Keratinocyte (primary cell): ENCODE measurements at regions of chr15 and their contacts with region 1.

Region 1: DNA sequence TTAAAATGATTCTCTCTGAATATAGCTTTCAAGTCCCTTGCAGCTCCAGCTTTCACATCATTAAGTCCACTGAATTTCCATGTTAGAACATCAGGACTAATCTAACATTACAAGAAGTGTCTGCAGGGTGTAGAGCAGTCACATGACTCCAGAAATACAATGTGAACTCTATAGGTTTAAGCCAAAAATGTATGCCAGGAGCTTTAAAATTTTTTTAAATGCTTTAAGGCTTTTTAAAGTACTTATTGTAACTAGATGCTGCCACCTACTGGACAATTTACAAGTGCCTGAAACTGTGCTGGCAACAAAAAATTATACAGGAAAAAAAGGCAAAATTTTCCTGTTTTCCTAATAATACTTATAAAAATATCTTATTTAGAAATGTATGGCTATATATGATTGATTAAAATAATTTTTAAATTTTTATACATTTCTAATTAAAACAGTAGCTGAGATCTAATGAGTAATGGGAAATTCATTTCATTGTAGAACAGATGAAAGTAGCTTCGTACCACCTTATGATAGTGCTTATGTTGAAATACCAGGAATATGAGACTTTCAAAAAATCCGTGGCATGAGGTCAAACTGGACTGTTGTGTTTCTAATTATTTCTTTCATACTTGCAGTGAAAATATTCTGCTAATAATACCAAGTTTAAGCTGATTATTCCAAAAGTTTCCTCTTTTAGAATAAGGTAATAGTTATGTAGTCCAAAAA is 25.7 kb downstream of the FSIP1 start:
- DNase-seq: peak; percentile 17
- H3K4me3 ChIP-seq: no peak overlapping the region
- H3K27ac ChIP-seq: no peak overlapping the region
- H3K4me1 ChIP-seq: no peaks in the 10 kb centered on the region
- H3K27me3 ChIP-seq: no peaks in the 10 kb centered on the region
- CTCF ChIP-seq: peak in 2 of 3 experiments; percentile 40 to 57

Region 2: DNA sequence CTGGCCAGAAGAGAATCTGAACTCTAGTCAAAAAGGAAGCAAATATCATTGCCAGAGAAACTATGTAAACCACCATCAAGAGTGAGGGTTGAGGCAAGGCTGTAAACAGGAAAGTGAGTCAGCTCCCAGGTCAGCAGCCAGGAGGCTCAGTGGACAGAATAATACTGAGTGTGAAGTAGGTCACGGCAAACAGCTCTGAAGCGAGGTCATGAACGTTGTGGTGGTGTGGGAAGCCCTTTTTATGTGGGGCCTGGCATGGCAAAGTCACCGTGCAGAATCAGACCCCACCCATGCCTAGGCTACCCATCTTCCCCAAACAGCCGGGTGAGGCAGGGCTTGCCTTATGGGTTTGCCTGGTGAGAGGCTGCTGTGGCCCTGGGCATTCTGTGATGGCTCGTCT is 132.2 kb before region 1 on chr15:
- dilution Hi-C with region 1: loop called (anchors 25 kb)
- DNase-seq: no peak
- H3K4me3 ChIP-seq: no peak overlapping the region
- H3K27ac ChIP-seq: peak overlapping the region; percentile 47
- H3K4me1 ChIP-seq: peaks cover 35% of the 10 kb centered on the region
- H3K27me3 ChIP-seq: no peaks in the 10 kb centered on the region
- CTCF ChIP-seq: no peak

Region 3: DNA sequence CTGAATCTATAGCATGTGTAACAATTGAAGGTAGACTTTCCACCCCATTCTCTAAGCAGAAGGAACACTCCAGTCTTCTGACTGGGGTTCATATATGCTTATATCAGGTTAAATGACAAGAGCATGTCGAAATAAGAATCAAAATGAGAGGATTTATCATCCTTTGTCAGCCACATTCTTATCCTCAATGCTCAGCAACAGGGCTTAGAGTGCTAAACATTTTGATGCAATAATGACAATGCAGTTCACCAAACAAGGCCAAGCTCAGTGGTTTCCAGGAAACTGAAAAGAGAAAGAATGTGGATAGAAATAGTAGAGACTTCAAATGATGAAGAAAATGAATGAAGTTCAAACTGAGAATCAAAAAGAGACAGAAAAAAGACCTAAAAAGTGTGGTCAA is 52.3 kb before region 1 on chr15:
- dilution Hi-C with region 1: loop called (anchors 5 kb)
- DNase-seq: no peak
- H3K4me3 ChIP-seq: no peak overlapping the region
- H3K27ac ChIP-seq: no peak overlapping the region
- H3K4me1 ChIP-seq: no peaks in the 10 kb centered on the region
- H3K27me3 ChIP-seq: no peaks in the 10 kb centered on the region
- CTCF ChIP-seq: no peak

Region 4: GRCh38 chr15:39852250-39852649 is 95.3 kb after region 1 on chr15:
- dilution Hi-C with region 1: no loop called
- DNase-seq: no peak
- H3K4me3 ChIP-seq: no peak overlapping the region
- H3K27ac ChIP-seq: no peak overlapping the region
- H3K4me1 ChIP-seq: no peaks in the 10 kb centered on the region
- H3K27me3 ChIP-seq: no peaks in the 10 kb centered on the region
- CTCF ChIP-seq: no peak